Spleen (tissue), 13 donors: ENCODE measurements at regions of chr10 and their contacts with region 1.

Region 1: DNA sequence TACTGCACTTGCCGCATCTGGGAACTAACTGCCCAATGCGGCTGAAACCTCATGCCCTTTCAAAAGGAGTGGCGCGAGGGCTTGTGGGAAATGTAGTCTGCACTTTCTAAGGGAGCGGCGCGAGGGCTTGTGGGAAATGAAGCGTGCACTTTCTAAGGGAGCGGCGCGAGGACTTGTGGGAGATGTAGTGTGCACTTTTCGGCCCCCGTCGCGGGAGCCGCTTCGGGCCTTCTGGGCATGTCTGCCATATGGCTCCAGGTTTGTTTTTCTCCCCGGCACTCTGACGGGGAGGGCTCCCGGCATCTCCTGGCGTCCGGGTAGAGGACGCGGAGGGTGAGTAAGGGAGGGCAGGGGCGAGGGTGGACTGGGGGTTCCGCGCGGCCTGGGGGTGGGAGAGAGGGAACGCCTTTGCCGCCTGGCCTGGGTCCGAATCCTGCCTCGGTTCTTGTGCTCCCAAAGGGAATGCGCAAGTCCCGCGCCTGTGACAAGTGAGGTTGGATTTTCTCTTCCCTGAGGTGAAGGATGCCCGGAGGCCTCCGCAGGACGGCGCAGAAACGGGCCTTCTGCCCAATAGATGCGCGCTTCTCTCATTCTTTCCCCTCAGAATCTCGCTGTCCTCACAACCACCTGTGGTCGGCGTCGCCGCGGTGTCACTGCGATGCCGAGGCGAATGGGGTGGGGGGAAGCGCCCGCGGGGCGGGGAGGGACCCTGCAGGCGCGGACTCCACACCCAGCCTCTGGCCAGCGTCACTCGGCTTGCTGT is at the start of gene ZNF37A:
- DNase-seq: peak; percentile 97
- H3K4me3 ChIP-seq: peak within 1 kb of the TSS; percentile 64 to 85 (median 76)
- H3K27ac ChIP-seq: peak within 1 kb of the TSS; percentile 84 to 92 (median 86)
- H3K4me1 ChIP-seq: peaks cover 5 to 28% (median 18%) of the 10 kb centered on the region in 6 donors
- H3K27me3 ChIP-seq: no peaks in the 10 kb centered on the region
- CTCF ChIP-seq: peak in 4 of 11 experiments; percentile 5 to 39 (median 24)
- POLR2A ChIP-seq: peak in 1 of 3 donors; percentile 33
- total RNA-seq, gene ZNF37A: 16.7 to 31.2 (median 23.2) TPM

Region 2: DNA sequence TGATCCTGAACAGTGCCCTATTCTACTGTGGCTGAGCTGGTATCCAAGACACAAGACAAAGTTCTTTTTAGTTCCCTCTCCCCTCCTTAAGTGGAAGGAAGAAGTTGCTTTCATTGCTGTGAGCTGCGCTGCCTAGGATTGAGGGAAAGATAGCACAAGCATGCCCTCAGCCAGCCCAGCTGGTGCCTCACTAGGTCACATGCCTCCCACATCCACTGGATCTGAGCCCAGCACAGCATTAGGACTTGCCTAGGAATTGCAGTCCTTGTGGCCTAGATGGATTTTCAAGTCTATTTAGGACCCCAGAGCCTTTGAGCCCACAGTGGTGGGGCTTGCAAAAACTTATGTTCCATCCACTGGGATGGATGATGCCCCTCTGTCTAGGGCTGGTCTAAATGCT is 451.2 kb before region 1 on chr10:
- intact Hi-C with region 1: no loop called
- DNase-seq: no peak
- H3K4me3 ChIP-seq: no peak overlapping the region
- H3K27ac ChIP-seq: no peak overlapping the region
- H3K4me1 ChIP-seq: no peaks in the 10 kb centered on the region
- H3K27me3 ChIP-seq: no peaks in the 10 kb centered on the region
- CTCF ChIP-seq: no peak
- POLR2A ChIP-seq: no peak

Region 3: DNA sequence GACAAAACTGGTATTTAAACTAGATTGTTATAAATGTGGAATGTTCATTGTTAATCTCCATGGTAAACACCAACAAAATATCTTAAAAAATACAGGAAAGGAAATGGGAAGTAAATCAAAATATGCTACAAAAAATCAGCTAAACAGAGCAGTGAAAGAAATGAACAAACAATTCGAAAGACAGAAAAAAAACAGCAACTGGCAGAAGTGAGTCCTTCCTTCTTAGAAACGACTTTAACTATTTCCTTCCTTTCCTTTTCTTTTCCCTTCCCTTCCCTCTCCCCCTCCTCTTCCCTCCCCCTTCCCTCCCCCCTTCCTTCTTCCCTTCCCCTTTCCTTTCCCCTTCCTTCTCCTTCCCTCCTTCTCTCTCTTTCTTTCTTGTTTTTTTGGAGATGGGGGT is 249.7 kb before region 1 on chr10:
- intact Hi-C with region 1: no loop called
- DNase-seq: no peak
- H3K4me3 ChIP-seq: no peak overlapping the region
- H3K27ac ChIP-seq: no peak overlapping the region
- H3K4me1 ChIP-seq: no peaks in the 10 kb centered on the region
- H3K27me3 ChIP-seq: no peaks in the 10 kb centered on the region
- CTCF ChIP-seq: no peak
- POLR2A ChIP-seq: no peak

Region 4: DNA sequence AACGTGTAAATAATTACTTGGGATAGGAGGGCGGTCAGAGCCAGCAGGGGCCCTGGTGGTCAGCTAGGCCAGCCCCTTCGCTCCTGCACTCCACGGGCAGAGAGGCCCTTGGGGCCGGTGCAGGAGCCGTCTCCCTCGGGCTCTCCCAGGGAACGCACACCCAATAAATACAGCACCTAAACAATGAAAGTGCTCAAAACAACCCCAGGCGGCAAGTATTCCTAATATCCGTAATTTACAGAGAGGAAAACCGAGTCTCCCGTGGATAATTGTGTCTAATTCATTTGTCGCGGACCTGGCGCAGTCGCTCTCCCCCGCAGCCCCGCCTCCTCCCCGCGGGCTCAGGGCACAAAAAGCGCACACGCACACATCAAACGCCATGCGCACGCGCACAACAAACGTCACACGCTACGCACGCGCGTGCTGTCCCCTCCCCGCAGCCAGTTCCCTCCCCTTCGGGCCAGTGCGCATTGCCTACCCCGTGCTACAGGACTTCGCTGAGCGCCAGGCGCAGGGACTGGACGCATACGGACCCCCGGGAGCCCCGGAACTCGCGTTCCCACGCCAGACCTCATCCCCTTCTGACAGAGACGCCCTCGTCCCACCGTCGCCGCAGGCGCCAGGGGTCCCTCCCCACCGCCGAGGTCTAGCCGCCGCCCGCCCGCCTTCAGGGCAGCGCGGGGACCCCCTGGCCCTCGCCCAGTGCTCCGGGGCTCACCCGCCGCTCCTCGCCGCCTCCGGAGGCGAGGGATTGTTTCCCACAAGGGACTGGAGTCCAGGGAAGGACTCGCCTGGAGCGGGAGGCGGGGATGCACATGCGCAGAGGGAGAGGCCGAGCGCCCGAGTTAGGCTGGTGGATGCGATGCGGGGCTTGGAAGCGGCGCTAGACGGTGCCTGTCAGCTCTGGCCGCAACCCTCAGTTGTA is 236.8 kb before region 1 on chr10 and contains the start of gene ZNF248:
- intact Hi-C with region 1: loop called (anchors 10 kb)
- DNase-seq: peak; percentile 99
- H3K4me3 ChIP-seq: peak within 1 kb of the TSS; percentile 63 to 83 (median 71)
- H3K27ac ChIP-seq: peak within 1 kb of the TSS; percentile 95 to 100 (median 99)
- H3K4me1 ChIP-seq: peaks cover 17 to 45% (median 32%) of the 10 kb centered on the region in 6 donors
- H3K27me3 ChIP-seq: no peaks in the 10 kb centered on the region
- CTCF ChIP-seq: peak in 2 of 11 experiments; percentile 3 to 13
- POLR2A ChIP-seq: peak; percentile 12 to 89 (median 89)
- total RNA-seq, gene ZNF248: 9.2 to 19.3 (median 13.7) TPM

Region 5: DNA sequence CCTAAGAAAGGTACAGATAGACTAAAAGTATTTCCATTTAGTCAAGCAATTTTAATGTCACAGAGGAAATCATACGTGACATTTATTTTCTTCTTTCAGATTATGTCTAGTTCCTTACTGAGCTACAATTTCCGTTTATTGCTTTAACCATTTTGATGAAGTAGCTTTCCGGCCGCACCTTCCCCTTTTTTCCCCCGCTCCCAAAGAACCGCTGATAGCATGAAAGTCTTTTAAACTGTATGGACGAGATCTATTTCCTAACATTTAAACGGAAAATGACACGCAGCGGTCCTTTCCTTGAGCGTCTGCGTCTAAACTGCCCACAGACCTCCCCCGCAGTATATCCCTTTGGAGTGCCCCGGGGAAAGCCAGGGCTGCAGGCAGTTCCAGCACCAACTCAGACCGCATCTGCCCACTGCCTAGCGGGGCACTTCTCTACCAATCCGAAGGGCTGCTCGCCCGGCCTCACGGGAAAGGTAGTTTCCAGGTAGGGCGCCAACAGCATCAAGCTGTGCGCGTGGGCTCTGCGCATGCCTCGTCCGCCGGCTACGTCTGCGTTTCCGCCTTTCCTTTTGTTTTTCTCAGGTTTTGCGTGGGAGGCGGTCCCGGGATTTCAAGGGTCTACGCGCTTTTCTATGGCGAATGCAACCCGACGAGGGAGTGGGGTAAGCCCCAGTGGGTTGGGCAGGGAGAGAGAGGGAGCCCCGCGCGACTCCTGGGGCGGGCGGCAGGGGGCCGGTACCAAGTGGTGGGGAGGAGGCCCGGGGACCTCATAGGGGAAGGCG is 84.0 kb before region 1 on chr10 and contains the start of gene ZNF33A:
- intact Hi-C with region 1: loop called (anchors 10 kb)
- DNase-seq: peak; percentile 98
- H3K4me3 ChIP-seq: peak within 1 kb of the TSS; percentile 55 to 88 (median 63)
- H3K27ac ChIP-seq: peak within 1 kb of the TSS; percentile 97 to 100 (median 99)
- H3K4me1 ChIP-seq: peaks cover 10 to 66% (median 40%) of the 10 kb centered on the region in 6 donors
- H3K27me3 ChIP-seq: no peaks in the 10 kb centered on the region
- CTCF ChIP-seq: peak in 2 of 11 experiments; percentile 8 to 19
- POLR2A ChIP-seq: peak in 2 of 3 donors; percentile 4 to 74
- total RNA-seq, gene ZNF33A: 33.7 to 61.6 (median 40.0) TPM